ENCODE measurements at regions of chr11 and their contacts with region 1.

Region 1: DNA sequence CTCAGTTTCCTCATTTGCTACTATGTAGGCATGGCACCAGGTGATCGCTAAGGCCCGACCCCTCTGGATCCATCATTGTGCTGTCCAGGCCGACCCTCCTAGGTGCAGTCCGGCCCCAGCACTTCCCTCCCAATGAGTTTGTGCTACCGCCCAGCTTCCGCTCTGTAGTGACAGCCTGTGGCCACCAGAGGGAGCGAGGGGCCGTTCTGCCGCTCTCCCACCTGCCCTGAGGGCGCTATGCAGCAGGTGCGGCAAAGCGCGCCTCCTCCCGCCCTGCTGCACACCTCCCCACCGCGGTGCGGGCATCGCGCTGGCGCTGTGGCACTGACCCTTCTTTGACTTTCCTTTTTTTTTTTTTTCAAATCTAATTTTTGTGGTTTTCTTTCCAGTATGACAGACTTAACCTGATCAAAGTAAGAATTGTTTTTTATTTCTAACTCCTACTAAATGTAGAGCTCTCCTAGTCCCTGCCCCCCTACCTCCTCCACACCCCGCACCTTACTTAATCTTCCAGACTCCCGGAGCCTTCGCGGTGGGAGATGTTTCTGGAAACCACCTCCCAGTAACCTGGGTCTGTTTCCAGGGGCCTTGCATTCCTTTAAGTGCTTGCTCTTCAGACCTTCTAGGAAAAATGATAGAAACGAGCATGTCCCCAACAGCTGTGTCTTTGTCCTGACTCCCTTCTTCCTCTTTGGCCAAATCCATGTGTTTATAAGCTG is 73.7 kb downstream of the SCN3B start:
- DNase-seq: peak; percentile 91
- ATAC-seq: peak; percentile 74
- H3K4me3 Mint-ChIP-seq: peak overlapping the region; percentile 46; the same call in 1 of the 2 replicates
- H3K27ac Mint-ChIP-seq: no peak overlapping the region
- H3K4me1 Mint-ChIP-seq: peaks cover 52% of the 10 kb centered on the region
- H3K27me3 Mint-ChIP-seq: no peaks in the 10 kb centered on the region; the same call in 1 of the 2 replicates
- CTCF ChIP-seq: peak; percentile 97

Region 2: GRCh38 chr11:123110356-123110755 is 470.4 kb before region 1 on chr11:
- CTCF ChIA-PET with region 1: interaction called, 11 read pairs
- POLR2A ChIA-PET with region 1: no interaction called
- DNase-seq: no peak
- ATAC-seq: no peak
- H3K4me3 Mint-ChIP-seq: no peak overlapping the region
- H3K27ac Mint-ChIP-seq: no peak overlapping the region
- H3K4me1 Mint-ChIP-seq: peaks cover 3% of the 10 kb centered on the region
- H3K27me3 Mint-ChIP-seq: no peaks in the 10 kb centered on the region
- CTCF ChIP-seq: no peak

Region 3: DNA sequence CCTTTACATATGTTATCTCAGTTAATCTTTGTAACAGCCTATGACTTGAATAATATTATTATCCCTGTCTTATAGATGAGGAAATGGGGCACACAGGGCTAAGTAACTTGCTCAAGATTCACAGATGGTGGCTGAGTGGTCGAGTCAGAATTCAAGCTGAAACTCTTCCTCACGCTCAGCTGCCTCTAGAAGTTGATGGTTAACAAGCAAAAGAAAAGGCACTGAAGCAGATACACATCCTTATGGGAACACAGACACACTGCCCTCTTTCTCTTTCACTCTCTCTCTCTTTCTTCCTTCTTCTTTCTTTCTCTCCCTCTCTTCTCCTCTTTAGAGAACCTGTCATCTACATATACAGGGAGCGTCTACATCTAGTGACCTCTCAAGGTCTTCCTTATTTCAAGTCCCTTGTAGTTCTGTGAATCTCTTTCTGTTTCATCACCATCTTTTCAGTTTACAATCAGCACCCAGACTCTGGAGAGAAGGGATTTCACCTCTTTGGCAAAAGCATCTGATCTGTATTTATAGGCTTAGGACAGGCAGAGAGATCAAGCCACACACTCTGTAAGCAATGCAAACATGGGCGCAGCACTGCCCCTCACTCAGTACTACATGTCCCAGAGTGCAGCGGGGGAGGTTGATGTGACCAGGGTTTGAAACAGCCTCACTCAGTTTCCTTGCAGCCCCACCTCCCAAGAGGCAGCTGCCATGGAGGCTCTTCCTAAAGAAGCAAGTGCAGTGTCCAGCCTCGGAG is 75.0 kb before region 1 on chr11:
- CTCF ChIA-PET with region 1: interaction called, 15 read pairs
- POLR2A ChIA-PET with region 1: no interaction called
- DNase-seq: peak; percentile 67
- ATAC-seq: peak; percentile 90
- H3K4me3 Mint-ChIP-seq: no peak overlapping the region
- H3K27ac Mint-ChIP-seq: peak overlapping the region; percentile 11
- H3K4me1 Mint-ChIP-seq: peaks cover 36% of the 10 kb centered on the region
- H3K27me3 Mint-ChIP-seq: no peaks in the 10 kb centered on the region
- CTCF ChIP-seq: no peak

Region 4: GRCh38 chr11:123519055-123519796 is 61.5 kb before region 1 on chr11:
- CTCF ChIA-PET with region 1: interaction called, 15 read pairs
- POLR2A ChIA-PET with region 1: no interaction called
- DNase-seq: no peak
- ATAC-seq: peak; percentile 71
- H3K4me3 Mint-ChIP-seq: no peak overlapping the region
- H3K27ac Mint-ChIP-seq: peak overlapping the region; percentile 60; the same call in 1 of the 2 replicates
- H3K4me1 Mint-ChIP-seq: peaks cover 47% of the 10 kb centered on the region
- H3K27me3 Mint-ChIP-seq: no peaks in the 10 kb centered on the region
- CTCF ChIP-seq: no peak

Region 5: GRCh38 chr11:123560006-123560405 is 20.7 kb before region 1 on chr11:
- CTCF ChIA-PET with region 1: interaction called, 50 read pairs
- POLR2A ChIA-PET with region 1: interaction called, 3 read pairs
- DNase-seq: no peak
- ATAC-seq: peak; percentile 31
- H3K4me3 Mint-ChIP-seq: peak overlapping the region; percentile 55
- H3K27ac Mint-ChIP-seq: peak overlapping the region; percentile 82; the same call in 1 of the 2 replicates
- H3K4me1 Mint-ChIP-seq: peaks cover 42% of the 10 kb centered on the region
- H3K27me3 Mint-ChIP-seq: no peaks in the 10 kb centered on the region
- CTCF ChIP-seq: no peak

Region 6: GRCh38 chr11:123640677-123641494 is 60.2 kb after region 1 on chr11:
- CTCF ChIA-PET with region 1: interaction called, 10 read pairs
- POLR2A ChIA-PET with region 1: no interaction called
- DNase-seq: peak; percentile 77
- ATAC-seq: peak; percentile 93
- H3K4me3 Mint-ChIP-seq: no peak overlapping the region
- H3K27ac Mint-ChIP-seq: no peak overlapping the region
- H3K4me1 Mint-ChIP-seq: peaks cover 31% of the 10 kb centered on the region
- H3K27me3 Mint-ChIP-seq: no peaks in the 10 kb centered on the region; the same call in 1 of the 2 replicates
- CTCF ChIP-seq: peak; percentile 84

Region 7: DNA sequence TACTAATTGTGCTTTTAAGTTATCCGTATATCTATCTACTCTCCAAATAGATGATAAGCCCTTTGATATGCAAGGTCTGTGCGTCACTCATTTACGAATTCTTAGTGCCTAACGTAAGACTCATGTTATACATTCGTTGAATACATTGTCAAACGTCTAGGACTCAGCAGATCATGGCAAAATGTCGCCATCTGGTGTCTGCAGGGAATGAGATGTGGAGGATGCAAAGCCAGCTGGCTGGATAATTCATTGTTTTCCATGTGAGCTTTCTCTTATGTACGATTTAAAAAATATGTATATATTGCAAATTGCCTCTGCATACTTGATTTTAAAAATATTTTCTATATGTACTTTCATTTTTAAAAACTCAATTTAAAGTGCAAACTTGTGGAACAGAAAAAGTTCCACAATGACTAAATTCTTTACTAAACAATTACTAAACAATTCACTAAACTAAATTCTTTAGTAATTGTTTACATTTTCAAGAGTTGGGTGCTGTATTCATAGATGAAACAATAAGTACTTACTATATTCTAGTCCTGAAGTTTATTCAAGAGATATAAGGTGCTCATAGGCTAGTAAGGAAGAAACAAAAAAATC is 127.0 kb after region 1 on chr11:
- CTCF ChIA-PET with region 1: interaction called, 40 read pairs
- POLR2A ChIA-PET with region 1: no interaction called
- DNase-seq: peak; percentile 71
- ATAC-seq: peak; percentile 74
- H3K4me3 Mint-ChIP-seq: no peak overlapping the region
- H3K27ac Mint-ChIP-seq: no peak overlapping the region
- H3K4me1 Mint-ChIP-seq: peaks cover 8% of the 10 kb centered on the region
- H3K27me3 Mint-ChIP-seq: peaks cover 2% of the 10 kb centered on the region; the same call in 1 of the 2 replicates
- CTCF ChIP-seq: no peak

Measured in WTC11 (cell line).